Activated CD4-positive, alpha-beta T cell treated with anti-CD3 and anti-CD28 coated beads, Interleukin-2, amount 10 ng/mL, durations not matched to agents 24 days and 14 days (primary cell): ENCODE measurements at regions of chr17 and their contacts with region 1.

Region 1: DNA sequence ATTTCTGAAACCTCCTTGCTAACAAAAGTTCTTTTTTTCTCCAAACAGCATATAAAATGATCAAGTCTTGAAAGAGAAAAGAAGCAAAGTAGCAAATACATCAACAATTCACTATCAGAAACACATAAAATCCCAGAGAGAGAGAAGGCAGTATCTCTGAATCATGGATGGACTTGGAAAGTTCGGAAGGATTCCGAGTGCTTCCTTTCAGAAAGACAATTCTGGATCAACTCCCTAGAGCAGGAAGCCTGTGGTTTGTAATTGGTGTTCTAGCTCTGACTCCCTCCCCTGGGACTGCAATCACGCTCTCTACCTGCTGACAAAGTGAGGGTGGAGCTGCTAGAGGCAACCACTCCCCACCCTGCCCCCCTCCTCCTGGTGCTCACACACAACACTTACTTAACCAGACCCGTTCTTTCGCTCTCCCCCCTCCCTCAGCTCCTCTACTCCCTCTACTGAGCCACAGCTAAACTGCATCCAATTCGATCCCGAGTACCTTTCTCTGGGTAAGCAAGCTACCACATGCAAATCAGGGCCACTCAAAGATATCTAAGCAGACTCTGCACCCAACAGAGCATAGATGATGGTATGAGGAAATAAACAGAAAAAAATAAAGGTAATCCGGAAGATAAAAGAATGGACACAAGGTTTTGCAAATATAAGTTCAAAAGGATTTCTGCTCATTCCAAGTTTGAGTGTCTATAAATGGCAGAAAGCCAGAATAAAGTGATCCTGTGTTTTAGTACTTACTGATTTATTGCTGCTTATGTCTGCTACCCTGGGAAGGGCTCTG is at the start of gene RNF43:
- DNase-seq: peak; percentile 94
- H3K4me3 Mint-ChIP-seq: peak within 1 kb of the TSS; percentile 35
- H3K27ac Mint-ChIP-seq: peak within 1 kb of the TSS; percentile 74
- H3K4me1 Mint-ChIP-seq: peaks cover 30% of the 10 kb centered on the region
- H3K27me3 Mint-ChIP-seq: no peaks in the 10 kb centered on the region
- total RNA-seq, gene RNF43: 0.95 and 1.6 TPM in 2 replicates

Region 2: GRCh38 chr17:58317421-58318064 is 100.0 kb before region 1 on chr17:
- intact Hi-C with region 1: loop called (anchors 1 kb)
- DNase-seq: peak; percentile 90
- H3K4me3 Mint-ChIP-seq: peak overlapping the region; percentile 18
- H3K27ac Mint-ChIP-seq: peak overlapping the region; percentile 85
- H3K4me1 Mint-ChIP-seq: peaks cover 13% of the 10 kb centered on the region
- H3K27me3 Mint-ChIP-seq: no peaks in the 10 kb centered on the region

Region 3: DNA sequence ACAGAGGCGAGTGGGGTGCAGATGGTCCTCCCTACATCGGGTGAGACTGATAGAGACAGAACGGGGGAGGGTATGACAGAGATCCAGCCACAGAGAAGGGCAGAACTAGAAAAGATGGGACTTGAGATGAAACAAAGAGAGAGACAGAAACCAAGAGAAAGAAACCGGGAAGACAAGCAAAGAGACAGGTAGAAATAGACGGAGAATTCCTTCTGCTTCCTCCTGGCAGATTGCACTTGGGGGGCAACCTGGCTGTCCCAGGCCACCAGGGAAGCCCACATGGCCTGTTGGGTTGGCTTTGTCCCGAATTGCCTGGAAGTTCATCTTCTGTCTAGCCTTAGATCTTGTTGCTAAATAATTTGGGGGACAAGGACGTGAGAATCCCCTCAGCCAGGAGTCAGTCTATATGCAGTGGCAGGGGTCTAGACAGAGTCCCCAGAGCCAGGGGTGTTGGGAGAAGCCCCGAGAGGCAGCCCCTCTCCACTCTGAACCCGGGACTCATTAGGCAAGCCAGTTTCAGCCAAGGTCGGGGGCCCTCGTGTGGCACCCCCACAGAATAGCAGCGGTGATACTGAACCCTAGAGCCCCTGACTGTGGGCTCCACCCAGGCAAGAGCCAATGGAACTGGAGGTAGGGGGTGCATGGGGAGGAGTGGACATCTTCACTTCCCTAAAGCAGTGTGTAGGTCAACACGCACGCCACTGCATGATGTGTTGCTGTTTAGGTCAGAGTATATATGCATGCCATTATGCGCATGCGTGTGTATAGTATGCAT is 88.3 kb before region 1 on chr17:
- intact Hi-C with region 1: loop called (anchors 1 kb)
- DNase-seq: peak; percentile 95
- H3K4me3 Mint-ChIP-seq: peak overlapping the region; percentile 91
- H3K27ac Mint-ChIP-seq: peak overlapping the region; percentile 96
- H3K4me1 Mint-ChIP-seq: peaks cover 45% of the 10 kb centered on the region
- H3K27me3 Mint-ChIP-seq: peaks cover 4% of the 10 kb centered on the region

Region 4: GRCh38 chr17:58344047-58344790 is 73.3 kb before region 1 on chr17:
- intact Hi-C with region 1: loop called (anchors 2 kb)
- DNase-seq: peak; percentile 97
- H3K4me3 Mint-ChIP-seq: peak overlapping the region; percentile 91
- H3K27ac Mint-ChIP-seq: peak overlapping the region; percentile 100
- H3K4me1 Mint-ChIP-seq: peaks cover 72% of the 10 kb centered on the region
- H3K27me3 Mint-ChIP-seq: no peaks in the 10 kb centered on the region

Region 5: GRCh38 chr17:58352014-58352842 is 65.3 kb before region 1 on chr17 and contains the start of gene SUPT4H1:
- intact Hi-C with region 1: loop called (anchors 1 kb)
- DNase-seq: peak; percentile 97
- H3K4me3 Mint-ChIP-seq: peak within 1 kb of the TSS; percentile 100
- H3K27ac Mint-ChIP-seq: peak within 1 kb of the TSS; percentile 99
- H3K4me1 Mint-ChIP-seq: peaks cover 45% of the 10 kb centered on the region
- H3K27me3 Mint-ChIP-seq: no peaks in the 10 kb centered on the region
- total RNA-seq, gene SUPT4H1: 139 and 143 TPM in 2 replicates

Region 6: GRCh38 chr17:58382108-58382871 is 35.2 kb before region 1 on chr17:
- intact Hi-C with region 1: loop called (anchors 1 kb)
- DNase-seq: peak; percentile 67
- H3K4me3 Mint-ChIP-seq: peak overlapping the region; percentile 37
- H3K27ac Mint-ChIP-seq: peak overlapping the region; percentile 68
- H3K4me1 Mint-ChIP-seq: peaks cover 45% of the 10 kb centered on the region
- H3K27me3 Mint-ChIP-seq: no peaks in the 10 kb centered on the region

Region 7: DNA sequence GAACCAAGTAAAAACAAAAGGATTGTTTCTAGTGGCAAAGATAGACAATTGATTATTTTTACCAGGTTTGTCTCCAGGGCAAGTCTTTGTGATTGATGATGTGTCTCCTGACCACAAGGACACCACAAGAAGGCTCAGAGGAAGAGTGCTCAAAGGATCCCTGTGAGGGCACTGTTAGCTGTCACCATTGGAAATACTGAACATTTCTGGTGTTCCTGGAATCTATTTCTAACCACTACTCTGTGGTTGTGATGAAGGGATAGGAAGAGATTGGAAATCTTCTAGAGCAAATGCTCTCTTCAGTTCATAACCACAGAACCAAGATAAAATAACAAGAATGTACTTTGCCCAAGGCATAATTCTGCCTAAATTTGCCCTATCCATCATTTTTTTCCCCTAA is 15.4 kb before region 1 on chr17:
- intact Hi-C with region 1: loop called (anchors 1 kb)
- DNase-seq: peak; percentile 66
- H3K4me3 Mint-ChIP-seq: peak overlapping the region; percentile 11
- H3K27ac Mint-ChIP-seq: peak overlapping the region; percentile 48
- H3K4me1 Mint-ChIP-seq: peaks cover 12% of the 10 kb centered on the region
- H3K27me3 Mint-ChIP-seq: no peaks in the 10 kb centered on the region